A549 (cell line): ENCODE measurements at regions of chr1 and their contacts with region 1.

Region 1: GRCh38 chr1:203486618-203487370 is 7.2 kb upstream of the OPTC start:
- DNase-seq: no peak
- ATAC-seq: no peak
- H3K4me3 ChIP-seq: no peak overlapping the region; the same call in 2 of the 3 replicates
- H3K27ac ChIP-seq: peak overlapping the region; percentile 76 to 88; a peak in 4 of 6 replicates
- H3K4me1 ChIP-seq: peaks cover 5% of the 10 kb centered on the region; the same call in 1 of the 3 replicates
- CTCF ChIP-seq: no peak
- EP300 ChIP-seq: no peak
- POLR2A ChIP-seq: no peak
- RAD21 ChIP-seq: no peak

Region 2: GRCh38 chr1:203210990-203211389 is 275.8 kb before region 1 on chr1:
- CTCF ChIA-PET with region 1: no interaction called
- POLR2A ChIA-PET with region 1: no interaction called
- DNase-seq: no peak
- ATAC-seq: no peak
- H3K4me3 ChIP-seq: no peak overlapping the region
- H3K27ac ChIP-seq: no peak overlapping the region
- H3K4me1 ChIP-seq: no peaks in the 10 kb centered on the region
- CTCF ChIP-seq: no peak
- EP300 ChIP-seq: no peak
- POLR2A ChIP-seq: no peak
- RAD21 ChIP-seq: no peak

Region 3: DNA sequence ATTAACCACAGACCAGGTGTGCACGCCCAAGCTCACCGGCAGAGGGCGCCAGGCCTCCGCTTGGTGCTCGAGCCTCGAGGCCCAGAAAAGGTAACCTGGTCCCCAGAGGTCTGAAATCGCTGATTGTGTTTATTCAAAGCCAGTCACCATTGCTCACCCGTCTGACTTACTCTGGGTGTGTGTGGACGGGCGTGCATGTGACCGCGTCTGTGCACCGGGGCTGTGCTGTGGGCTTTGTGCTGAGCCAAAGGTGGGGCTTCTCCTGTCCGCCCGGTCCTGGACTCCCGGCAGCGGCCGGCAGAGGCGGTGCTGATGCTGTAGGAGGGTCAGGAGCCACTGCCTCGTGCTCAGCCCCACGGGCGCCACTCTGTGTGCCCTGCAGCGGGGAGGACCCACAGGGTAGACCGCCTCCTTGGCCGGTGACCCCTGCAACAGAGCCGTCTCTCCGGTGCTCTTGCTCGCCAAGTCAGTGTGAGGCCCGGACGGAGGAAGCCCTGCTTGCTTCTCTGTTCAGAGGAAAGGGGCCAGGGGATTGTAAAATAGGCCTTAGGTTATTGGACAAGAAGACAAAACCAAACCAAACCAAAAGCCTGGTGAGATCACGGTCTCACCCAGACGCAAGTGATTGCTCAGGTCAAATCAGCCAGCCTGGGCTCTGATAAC is 213.5 kb before region 1 on chr1:
- CTCF ChIA-PET with region 1: interaction called, 38 read pairs
- POLR2A ChIA-PET with region 1: no interaction called
- DNase-seq: peak; percentile 73 to 82
- ATAC-seq: peak; percentile 73 to 88
- H3K4me3 ChIP-seq: no peak overlapping the region
- H3K27ac ChIP-seq: peak overlapping the region; percentile 29 to 67; a peak in 4 of 6 replicates
- H3K4me1 ChIP-seq: peaks cover 9% of the 10 kb centered on the region
- CTCF ChIP-seq: peak; percentile 97
- EP300 ChIP-seq: no peak
- POLR2A ChIP-seq: no peak
- RAD21 ChIP-seq: peak; percentile 93 to 95

Region 4: DNA sequence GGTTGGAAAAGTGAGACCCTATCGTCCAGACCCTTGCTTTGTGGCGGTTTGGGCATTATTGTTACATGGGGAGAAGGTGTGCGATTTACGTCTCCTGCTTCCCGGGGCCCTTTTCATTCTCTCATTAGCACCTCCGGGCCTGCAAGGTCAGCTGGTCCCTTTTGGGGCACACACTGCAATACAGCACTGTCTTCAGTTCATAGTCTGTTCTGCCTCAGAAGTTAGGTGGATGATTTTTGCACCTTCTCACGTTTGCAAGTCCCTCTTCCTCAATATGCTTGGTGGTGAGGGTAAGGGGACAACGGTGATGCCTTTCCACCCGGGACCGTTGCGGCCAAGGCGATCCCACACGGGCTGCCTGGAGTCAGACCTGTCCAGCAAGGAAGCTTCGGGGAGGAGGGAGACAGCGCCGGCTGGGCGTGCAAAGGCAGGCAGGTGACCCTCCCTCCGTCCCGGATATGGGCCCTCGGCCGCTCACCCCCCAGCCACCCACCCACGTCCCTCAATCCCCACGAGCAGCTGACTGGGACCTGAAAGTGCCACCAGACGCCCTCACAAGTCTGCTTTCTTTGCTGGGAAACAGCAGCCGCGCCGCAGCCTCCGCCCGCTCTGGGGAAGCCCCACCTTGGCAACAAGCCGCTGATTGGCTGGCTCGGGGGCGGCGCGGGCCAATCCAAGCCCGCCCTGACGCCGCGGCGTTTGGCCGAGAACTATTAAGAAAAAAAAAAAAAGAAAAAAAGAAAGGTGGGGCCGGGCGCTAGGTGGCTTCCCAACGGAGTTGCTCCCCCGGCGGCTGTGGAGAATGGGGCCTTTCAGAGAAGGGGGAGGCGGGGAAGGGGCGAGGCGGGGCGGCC is 159.7 kb before region 1 on chr1:
- CTCF ChIA-PET with region 1: interaction called, 13 read pairs
- POLR2A ChIA-PET with region 1: no interaction called
- DNase-seq: peak; percentile 87 to 95
- ATAC-seq: peak; percentile 86 to 97
- H3K4me3 ChIP-seq: peak overlapping the region; percentile 49
- H3K27ac ChIP-seq: peak overlapping the region; percentile 88 to 92
- H3K4me1 ChIP-seq: peaks cover 27% of the 10 kb centered on the region
- CTCF ChIP-seq: no peak
- EP300 ChIP-seq: no peak
- POLR2A ChIP-seq: peak; percentile 64
- RAD21 ChIP-seq: no peak

Region 5: DNA sequence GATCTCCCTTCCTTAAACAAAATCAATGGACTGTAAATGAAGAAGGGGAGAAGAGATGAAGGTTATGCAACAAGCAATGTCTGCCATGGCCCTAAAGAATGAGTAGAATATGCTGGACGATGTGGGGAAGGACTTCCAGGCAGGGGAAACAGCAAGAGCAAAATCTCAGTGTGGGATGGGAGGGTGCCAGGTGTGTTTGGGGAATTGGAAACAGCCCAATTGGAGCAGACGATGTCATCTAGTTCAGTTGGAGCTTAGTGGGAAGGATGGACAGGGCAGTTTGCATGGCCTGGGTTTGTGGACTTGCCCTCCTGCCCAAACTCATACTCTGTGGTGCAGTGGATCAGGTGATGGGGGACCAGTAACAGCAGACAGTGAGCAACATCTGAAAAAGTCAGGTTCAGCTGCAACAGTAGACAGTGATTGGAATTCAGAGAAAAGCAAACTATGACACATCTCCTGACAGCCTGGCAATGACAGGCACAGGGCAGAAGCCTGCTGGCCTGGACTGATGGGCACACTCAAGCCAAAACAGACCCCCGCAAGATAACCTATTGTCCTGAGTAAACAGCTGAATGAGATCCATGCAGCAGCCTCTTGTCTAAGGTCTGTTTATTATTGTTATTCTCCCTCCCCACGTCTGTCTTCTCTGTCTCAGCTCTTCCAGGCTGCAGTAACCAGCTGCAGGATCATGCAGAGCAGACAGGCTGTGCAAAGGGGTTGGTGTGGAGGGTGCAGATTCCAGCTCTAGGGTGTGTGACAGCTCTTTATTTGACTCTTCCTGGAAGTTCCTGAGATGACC is 61.7 kb before region 1 on chr1:
- CTCF ChIA-PET with region 1: no interaction called
- POLR2A ChIA-PET with region 1: no interaction called
- DNase-seq: no peak
- ATAC-seq: peak; percentile 63 to 72; a peak in 5 of 6 replicates
- H3K4me3 ChIP-seq: no peak overlapping the region
- H3K27ac ChIP-seq: no peak overlapping the region
- H3K4me1 ChIP-seq: peaks cover 13% of the 10 kb centered on the region; the same call in 2 of the 3 replicates
- CTCF ChIP-seq: no peak
- EP300 ChIP-seq: no peak
- POLR2A ChIP-seq: no peak
- RAD21 ChIP-seq: no peak

Region 6: GRCh38 chr1:203475012-203475981 is 11.5 kb before region 1 on chr1 and contains the start of gene PRELP:
- CTCF ChIA-PET with region 1: interaction called, 39 read pairs
- POLR2A ChIA-PET with region 1: no interaction called
- DNase-seq: peak in 1 of 2 experiments; percentile 5
- ATAC-seq: no peak
- H3K4me3 ChIP-seq: no peak within 1 kb of the TSS
- H3K27ac ChIP-seq: no peak within 1 kb of the TSS
- H3K4me1 ChIP-seq: peaks cover under 1% of the 10 kb centered on the region; the same call in 1 of the 3 replicates
- CTCF ChIP-seq: no peak
- EP300 ChIP-seq: no peak
- POLR2A ChIP-seq: no peak
- RAD21 ChIP-seq: no peak
- polyA plus RNA-seq, gene PRELP: not detected in 2 replicates

Region 7: DNA sequence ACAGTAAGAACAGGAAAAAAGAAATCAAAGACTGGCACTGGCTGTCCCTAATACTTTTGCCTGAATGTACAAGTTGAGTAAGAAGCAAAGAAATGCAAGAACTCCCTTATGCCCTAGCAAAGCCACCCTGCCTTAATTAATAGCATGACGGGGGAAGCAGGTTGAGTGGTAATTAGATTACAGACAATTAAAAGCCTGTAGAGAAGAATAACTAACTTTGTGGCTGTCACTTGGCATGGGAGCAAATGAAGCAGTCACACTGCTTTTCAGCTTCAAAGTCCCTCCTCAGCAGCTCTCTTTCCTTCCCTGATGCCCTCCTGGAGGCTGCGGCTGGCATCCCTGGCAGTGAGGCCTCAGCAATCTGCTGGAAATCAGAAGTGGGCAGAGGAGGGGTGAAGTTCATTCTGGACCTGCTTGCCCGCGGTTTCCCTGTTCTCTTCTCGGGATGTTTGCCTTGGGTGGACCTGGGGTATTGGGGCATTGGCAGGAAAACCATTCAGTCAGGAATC is 10.5 kb after region 1 on chr1:
- CTCF ChIA-PET with region 1: interaction called, 39 read pairs
- POLR2A ChIA-PET with region 1: no interaction called
- DNase-seq: no peak
- ATAC-seq: no peak
- H3K4me3 ChIP-seq: no peak overlapping the region
- H3K27ac ChIP-seq: no peak overlapping the region
- H3K4me1 ChIP-seq: no peaks in the 10 kb centered on the region
- CTCF ChIP-seq: no peak
- EP300 ChIP-seq: no peak
- POLR2A ChIP-seq: no peak
- RAD21 ChIP-seq: no peak

Region 8: GRCh38 chr1:203600782-203601736 is 114.3 kb after region 1 on chr1:
- CTCF ChIA-PET with region 1: no interaction called
- POLR2A ChIA-PET with region 1: no interaction called
- DNase-seq: no peak
- ATAC-seq: no peak; a peak in 2 of 6 replicates
- H3K4me3 ChIP-seq: no peak overlapping the region
- H3K27ac ChIP-seq: no peak overlapping the region
- H3K4me1 ChIP-seq: peaks cover 6% of the 10 kb centered on the region
- CTCF ChIP-seq: no peak
- EP300 ChIP-seq: no peak
- POLR2A ChIP-seq: no peak
- RAD21 ChIP-seq: no peak

Region 9: DNA sequence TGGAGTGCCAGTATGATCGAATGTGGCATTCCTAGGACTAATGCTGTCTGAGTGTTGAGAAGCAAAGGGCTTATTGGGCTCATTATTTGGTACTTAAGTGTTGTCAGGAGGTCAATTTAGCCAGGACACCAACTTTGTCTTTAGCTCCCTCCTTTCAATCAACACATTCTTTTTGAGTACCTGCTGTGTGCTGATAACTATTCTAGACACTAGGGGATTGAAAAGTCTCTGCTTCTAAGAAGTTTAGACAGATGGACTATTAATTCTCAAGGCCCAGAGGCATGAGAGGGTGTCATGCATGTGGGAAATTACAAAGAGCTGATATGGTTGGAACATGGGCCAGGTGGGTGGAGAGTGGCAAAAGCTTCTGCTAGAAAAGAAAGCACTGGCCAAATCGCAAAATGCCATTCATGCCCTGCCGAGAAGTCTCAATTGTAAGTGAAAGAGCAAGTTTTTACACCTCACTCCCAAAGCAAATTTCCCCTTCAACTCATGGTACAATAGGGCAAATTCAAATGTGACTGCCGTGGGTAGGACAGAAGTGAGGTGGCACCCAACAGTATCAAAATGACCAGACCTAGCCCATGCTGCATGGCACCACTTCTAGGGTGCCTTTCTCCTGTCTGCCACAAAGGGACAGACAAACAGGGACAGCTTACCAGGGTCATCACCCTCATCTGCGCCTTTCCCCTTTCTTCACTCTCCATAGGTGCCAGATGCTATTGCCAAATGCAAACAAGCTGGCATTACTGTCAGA is 224.6 kb after region 1 on chr1:
- CTCF ChIA-PET with region 1: interaction called, 10 read pairs
- POLR2A ChIA-PET with region 1: no interaction called
- DNase-seq: no peak
- ATAC-seq: no peak
- H3K4me3 ChIP-seq: no peak overlapping the region
- H3K27ac ChIP-seq: no peak overlapping the region
- H3K4me1 ChIP-seq: no peaks in the 10 kb centered on the region
- CTCF ChIP-seq: no peak
- EP300 ChIP-seq: no peak
- POLR2A ChIP-seq: no peak
- RAD21 ChIP-seq: no peak